Activated CD8-positive, alpha-beta T cell treated with anti-CD3 and anti-CD28 coated beads for 36 hours (primary cell): ENCODE measurements at regions of chr1 and their contacts with region 1.

Region 1: DNA sequence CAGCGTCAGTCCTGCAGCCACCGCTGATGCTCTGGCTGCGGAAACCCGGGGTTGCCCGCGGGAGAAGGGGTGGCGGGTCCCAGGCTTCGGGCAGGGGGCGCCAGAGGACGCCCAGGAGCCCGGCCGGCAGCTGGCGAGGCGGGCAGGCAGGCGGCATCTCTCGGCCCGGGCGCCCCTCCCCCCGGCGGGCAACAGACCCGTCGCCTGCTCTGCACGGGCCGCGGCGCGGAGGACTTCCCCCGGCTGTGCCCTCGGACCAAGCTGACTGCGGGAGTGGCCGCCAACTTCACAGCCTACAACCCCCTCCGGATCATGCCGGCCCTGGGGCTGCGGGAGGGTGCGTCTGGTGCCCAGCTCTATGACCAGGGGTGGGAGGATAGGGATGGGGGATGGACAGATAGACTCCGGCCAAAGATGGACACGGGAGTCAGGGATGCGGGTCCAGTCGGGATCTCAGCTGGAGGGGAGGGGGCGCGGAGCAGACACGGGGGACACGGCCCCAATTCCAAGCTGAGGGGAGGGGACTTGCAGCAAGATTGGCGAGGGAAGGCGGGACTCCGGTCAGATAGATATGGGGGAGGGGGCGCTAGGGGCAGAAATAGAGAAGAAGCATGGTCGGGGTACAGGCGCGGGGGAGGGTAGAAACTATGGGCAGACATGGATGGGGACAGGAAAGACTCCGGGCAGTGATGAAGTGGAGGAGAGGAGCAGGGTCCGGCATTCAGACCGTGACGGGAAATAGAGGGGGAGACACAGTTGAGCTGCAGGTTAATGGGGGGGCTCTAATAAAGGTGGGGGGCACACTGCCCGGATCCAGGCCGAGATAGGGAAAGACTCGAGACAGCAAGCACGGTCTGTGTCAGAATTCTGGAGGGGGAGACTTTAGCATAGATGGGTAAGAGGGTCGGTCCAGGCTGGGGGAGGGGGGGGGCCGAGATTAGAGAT is 1.1 kb downstream of the ADGRB2 start:
- DNase-seq: peak; percentile 74
- ATAC-seq: peak; percentile 55
- H3K4me3 Mint-ChIP-seq: peak overlapping the region; percentile 64
- H3K27ac Mint-ChIP-seq: no peak overlapping the region
- H3K4me1 Mint-ChIP-seq: peaks cover 22% of the 10 kb centered on the region
- H3K27me3 Mint-ChIP-seq: peaks cover 27% of the 10 kb centered on the region
- CTCF ChIP-seq: peak; percentile 83

Region 2: GRCh38 chr1:31750858-31751510 is 12.0 kb before region 1 on chr1:
- CTCF ChIA-PET with region 1: interaction called, 15 read pairs
- POLR2A ChIA-PET with region 1: interaction called, 4 read pairs
- intact Hi-C with region 1: no loop called
- DNase-seq: peak; percentile 60
- ATAC-seq: peak; percentile 70
- H3K4me3 Mint-ChIP-seq: no peak overlapping the region
- H3K27ac Mint-ChIP-seq: no peak overlapping the region
- H3K4me1 Mint-ChIP-seq: peaks cover 33% of the 10 kb centered on the region
- H3K27me3 Mint-ChIP-seq: peaks cover 2% of the 10 kb centered on the region
- CTCF ChIP-seq: no peak